ENCODE measurements at regions of chr15 and their contacts with region 1.

Region 1: GRCh38 chr15:54519577-54519976 is 541.3 kb downstream of the UNC13C start:
- DNase-seq: no peak
- H3K4me3 ChIP-seq: no peak overlapping the region
- H3K27ac ChIP-seq: no peak overlapping the region
- H3K4me1 ChIP-seq: peaks cover 0 to 9% of the 10 kb centered on the region in 2 donors
- H3K27me3 ChIP-seq: no peaks in the 10 kb centered on the region
- CTCF ChIP-seq: no peak

Region 2: DNA sequence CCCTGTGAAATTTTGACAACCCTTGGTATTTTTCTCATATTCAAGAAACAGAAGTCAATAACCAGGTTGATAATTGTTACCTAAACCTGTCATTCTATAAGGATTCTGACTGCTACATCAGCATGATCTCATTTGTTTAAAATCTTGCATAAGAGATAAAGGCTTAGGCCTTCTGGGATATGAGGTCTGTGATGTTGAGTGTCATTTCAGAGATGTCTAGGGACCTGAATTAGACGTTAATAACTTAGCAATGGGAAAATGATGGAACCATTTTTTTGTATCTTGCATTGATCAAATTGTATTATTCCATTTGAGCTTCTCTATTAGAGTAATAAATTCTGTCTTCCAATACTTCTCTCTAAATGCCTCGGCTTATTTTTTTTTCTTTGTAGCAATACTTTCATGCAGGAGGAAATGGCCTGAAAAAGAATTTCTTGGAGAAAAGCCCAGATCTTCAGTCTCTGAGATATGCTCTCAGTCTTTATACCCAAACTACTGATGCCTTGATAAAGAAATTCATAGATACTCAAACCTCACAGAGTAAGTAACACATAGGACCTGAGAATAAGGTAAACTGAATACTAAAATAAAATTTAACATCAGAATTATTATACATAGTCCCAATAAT is 47.9 kb after region 1 on chr15:
- intact Hi-C with region 1: loop called (anchors 5 kb)
- DNase-seq: no peak
- H3K4me3 ChIP-seq: no peak overlapping the region
- H3K27ac ChIP-seq: no peak overlapping the region
- H3K4me1 ChIP-seq: no peaks in the 10 kb centered on the region
- H3K27me3 ChIP-seq: no peaks in the 10 kb centered on the region
- CTCF ChIP-seq: no peak